Activated CD4-positive, alpha-beta T cell treated with anti-CD3 and anti-CD28 coated beads, Interleukin-2, amount 10 ng/mL, durations not matched to agents 24 days and 14 days (primary cell): ENCODE measurements at regions of chr11 and their contacts with region 1.

Region 1: GRCh38 chr11:35013514-35014233 is 97.3 kb downstream of the PDHX start:
- DNase-seq: peak; percentile 85
- H3K4me3 Mint-ChIP-seq: peak overlapping the region; percentile 50
- H3K27ac Mint-ChIP-seq: peak overlapping the region; percentile 91
- H3K4me1 Mint-ChIP-seq: peaks cover 39% of the 10 kb centered on the region
- H3K27me3 Mint-ChIP-seq: peaks cover 16% of the 10 kb centered on the region

Region 2: GRCh38 chr11:34243726-34244464 is 769.8 kb before region 1 on chr11:
- intact Hi-C with region 1: loop called (anchors 5 kb)
- DNase-seq: peak; percentile 82
- H3K4me3 Mint-ChIP-seq: peak overlapping the region; percentile 62
- H3K27ac Mint-ChIP-seq: peak overlapping the region; percentile 72
- H3K4me1 Mint-ChIP-seq: peaks cover 80% of the 10 kb centered on the region
- H3K27me3 Mint-ChIP-seq: no peaks in the 10 kb centered on the region

Region 3: DNA sequence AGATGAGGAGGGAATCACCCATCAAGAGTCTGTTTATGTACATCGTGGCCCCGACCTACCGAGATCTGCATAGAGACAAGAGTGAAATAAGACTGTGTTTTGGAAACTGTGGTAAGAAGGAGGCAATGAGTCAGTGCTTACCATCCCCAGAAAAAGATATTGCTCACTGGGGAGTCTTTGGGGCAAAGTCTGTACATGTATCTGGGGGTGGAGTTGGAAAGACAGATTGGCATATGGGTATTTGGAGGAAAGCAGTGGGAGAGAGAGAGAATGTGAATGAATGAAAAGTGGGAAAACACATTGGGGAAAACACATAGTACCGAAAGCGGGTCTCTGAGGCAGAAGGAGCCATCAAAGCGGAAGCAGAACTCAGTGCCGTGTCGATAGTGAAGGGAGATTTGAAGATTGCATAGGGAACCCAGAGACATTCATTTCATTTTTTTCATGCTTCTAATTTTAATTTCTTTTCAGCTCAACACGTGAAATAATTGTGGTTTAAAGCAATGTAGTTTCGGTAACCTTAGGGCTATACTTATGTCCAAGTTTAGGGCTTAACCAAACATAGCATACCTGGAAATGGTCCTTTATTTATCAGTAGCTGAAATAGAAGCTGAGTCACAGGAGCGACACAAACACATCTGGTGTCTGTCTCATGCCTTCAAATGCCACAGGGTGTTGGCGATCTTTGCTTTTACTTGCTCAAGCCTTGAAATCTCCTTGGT is 26.7 kb after region 1 on chr11:
- intact Hi-C with region 1: loop called (anchors 1 kb)
- DNase-seq: peak; percentile 91
- H3K4me3 Mint-ChIP-seq: peak overlapping the region; percentile 77
- H3K27ac Mint-ChIP-seq: peak overlapping the region; percentile 94
- H3K4me1 Mint-ChIP-seq: peaks cover 52% of the 10 kb centered on the region
- H3K27me3 Mint-ChIP-seq: peaks cover 9% of the 10 kb centered on the region

Region 4: DNA sequence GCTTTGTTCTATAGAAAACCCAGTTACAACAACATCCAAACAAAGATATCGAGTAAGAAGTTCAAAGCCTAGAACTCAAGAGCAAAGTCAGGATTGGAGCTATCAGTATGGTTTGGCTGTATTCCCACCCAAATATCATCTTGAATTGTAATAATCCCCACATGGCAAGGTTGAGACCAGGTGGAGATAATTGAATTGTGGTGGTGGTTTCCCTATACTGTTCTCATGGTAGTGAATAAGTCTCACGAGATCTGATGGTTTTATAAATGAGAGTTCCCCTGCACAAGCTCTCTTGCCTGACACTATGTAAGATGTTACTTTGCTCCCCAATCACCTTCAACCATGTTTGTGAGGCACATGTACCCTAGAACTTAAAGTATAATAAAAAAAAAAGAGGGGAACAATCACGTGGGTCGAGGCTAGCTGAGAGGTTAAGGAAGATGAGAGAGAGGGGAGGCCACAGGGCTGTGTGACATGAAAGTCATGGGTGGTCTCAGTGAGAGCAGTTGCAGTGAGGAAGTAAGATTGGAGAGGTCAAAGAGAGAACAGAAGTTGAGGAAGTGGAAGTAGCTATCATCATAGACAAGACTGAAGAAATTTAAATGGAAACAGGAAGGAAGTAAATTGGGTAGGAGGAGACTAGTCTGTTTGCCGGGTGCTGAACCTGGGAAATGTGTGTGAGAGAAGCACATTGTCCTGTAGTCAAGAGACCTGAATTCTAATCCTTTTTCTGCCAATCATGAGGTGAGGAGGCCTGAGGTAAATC is 45.2 kb after region 1 on chr11:
- intact Hi-C with region 1: no loop called
- DNase-seq: no peak
- H3K4me3 Mint-ChIP-seq: no peak overlapping the region
- H3K27ac Mint-ChIP-seq: no peak overlapping the region
- H3K4me1 Mint-ChIP-seq: peaks cover 22% of the 10 kb centered on the region
- H3K27me3 Mint-ChIP-seq: no peaks in the 10 kb centered on the region

Region 5: GRCh38 chr11:35165423-35166368 is 152.0 kb after region 1 on chr11:
- intact Hi-C with region 1: loop called (anchors 1 kb)
- DNase-seq: peak; percentile 98
- H3K4me3 Mint-ChIP-seq: peak overlapping the region; percentile 78
- H3K27ac Mint-ChIP-seq: peak overlapping the region; percentile 99
- H3K4me1 Mint-ChIP-seq: peaks cover 93% of the 10 kb centered on the region
- H3K27me3 Mint-ChIP-seq: no peaks in the 10 kb centered on the region

Region 6: GRCh38 chr11:35272391-35272902 is 258.8 kb after region 1 on chr11:
- intact Hi-C with region 1: loop called (anchors 1 kb)
- DNase-seq: peak; percentile 86
- H3K4me3 Mint-ChIP-seq: peak overlapping the region; percentile 16
- H3K27ac Mint-ChIP-seq: peak overlapping the region; percentile 87
- H3K4me1 Mint-ChIP-seq: peaks cover 60% of the 10 kb centered on the region
- H3K27me3 Mint-ChIP-seq: peaks cover 2% of the 10 kb centered on the region

Region 7: GRCh38 chr11:35343033-35343598 is 329.4 kb after region 1 on chr11:
- intact Hi-C with region 1: loop called (anchors 1 kb)
- DNase-seq: peak; percentile 92
- H3K4me3 Mint-ChIP-seq: peak overlapping the region; percentile 68
- H3K27ac Mint-ChIP-seq: peak overlapping the region; percentile 89
- H3K4me1 Mint-ChIP-seq: peaks cover 37% of the 10 kb centered on the region
- H3K27me3 Mint-ChIP-seq: peaks cover 3% of the 10 kb centered on the region